ENCODE measurements at regions of chr17 and their contacts with region 1.

Region 1: GRCh38 chr17:75205037-75205792 is at the start of gene NUP85:
- DNase-seq: peak; percentile 84 to 96 (median 92)
- ATAC-seq: peak; percentile 93
- H3K4me3 ChIP-seq: peak within 1 kb of the TSS; percentile 85 to 93
- H3K4me3 Mint-ChIP-seq: peak within 1 kb of the TSS; percentile 94
- H3K27ac ChIP-seq: peak within 1 kb of the TSS; percentile 70 to 89
- H3K27ac Mint-ChIP-seq: peak within 1 kb of the TSS; percentile 99
- H3K4me1 ChIP-seq: peaks cover 19% of the 10 kb centered on the region
- H3K4me1 Mint-ChIP-seq: peaks cover 23% of the 10 kb centered on the region
- H3K27me3 ChIP-seq: no peaks in the 10 kb centered on the region
- H3K27me3 Mint-ChIP-seq: no peaks in the 10 kb centered on the region
- CTCF ChIP-seq: no peak
- total RNA-seq, gene NUP85: 57.4 to 65.3 TPM

Region 2: DNA sequence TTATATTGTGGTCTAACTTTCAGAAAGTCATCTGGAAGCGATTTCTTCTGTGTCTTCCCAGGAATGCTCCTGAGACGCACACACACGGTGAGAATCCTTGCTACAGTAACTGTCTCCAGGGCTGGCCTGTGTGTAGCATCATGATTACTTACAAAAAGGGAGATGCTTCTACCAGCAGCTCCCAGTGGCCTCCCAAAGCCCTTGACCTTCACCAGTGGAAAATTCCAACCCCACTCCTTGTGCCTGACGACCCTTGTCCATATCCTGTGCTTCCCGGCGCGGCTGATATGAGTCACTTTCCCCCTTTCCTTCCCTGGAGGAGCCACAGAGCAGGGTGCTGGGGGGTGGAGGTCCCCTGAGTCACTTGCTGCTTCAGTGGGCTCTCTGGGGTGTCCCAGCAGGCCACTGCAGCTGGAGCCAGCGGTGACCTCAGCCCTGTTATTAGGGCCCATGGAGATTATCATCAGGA is 406.9 kb before region 1 on chr17:
- CTCF ChIA-PET with region 1: no interaction called
- POLR2A ChIA-PET with region 1: no interaction called
- intact Hi-C with region 1: no loop called
- DNase-seq: no peak
- ATAC-seq: no peak
- H3K4me3 ChIP-seq: no peak overlapping the region
- H3K4me3 Mint-ChIP-seq: no peak overlapping the region
- H3K27ac ChIP-seq: no peak overlapping the region
- H3K27ac Mint-ChIP-seq: no peak overlapping the region
- H3K4me1 ChIP-seq: no peaks in the 10 kb centered on the region
- H3K4me1 Mint-ChIP-seq: peaks cover 2% of the 10 kb centered on the region
- H3K27me3 ChIP-seq: no peaks in the 10 kb centered on the region
- H3K27me3 Mint-ChIP-seq: no peaks in the 10 kb centered on the region
- CTCF ChIP-seq: no peak

Region 3: GRCh38 chr17:74923533-74924249 is 281.5 kb before region 1 on chr17:
- CTCF ChIA-PET with region 1: no interaction called
- POLR2A ChIA-PET with region 1: no interaction called
- intact Hi-C with region 1: loop called in 1 of 2 experiments (anchors 1 kb)
- DNase-seq: peak; percentile 45 to 84 (median 73)
- ATAC-seq: peak; percentile 67
- H3K4me3 ChIP-seq: peak overlapping the region; percentile 29 to 41
- H3K4me3 Mint-ChIP-seq: peak overlapping the region; percentile 67
- H3K27ac ChIP-seq: no peak overlapping the region
- H3K27ac Mint-ChIP-seq: no peak overlapping the region
- H3K4me1 ChIP-seq: peaks cover 13% of the 10 kb centered on the region
- H3K4me1 Mint-ChIP-seq: peaks cover 8% of the 10 kb centered on the region
- H3K27me3 ChIP-seq: peaks cover 27% of the 10 kb centered on the region in 2 experiments
- H3K27me3 Mint-ChIP-seq: peaks cover 55% of the 10 kb centered on the region
- CTCF ChIP-seq: peak; percentile 86

Region 4: GRCh38 chr17:75154195-75155106 is 50.8 kb before region 1 on chr17 and contains the start of gene JPT1:
- CTCF ChIA-PET with region 1: interaction called, 4 read pairs
- POLR2A ChIA-PET with region 1: interaction called, 3 read pairs
- intact Hi-C with region 1: loop called (anchors 1 to 2 kb)
- DNase-seq: peak; percentile 94 to 99 (median 97)
- ATAC-seq: peak; percentile 97
- H3K4me3 ChIP-seq: peak within 1 kb of the TSS; percentile 88 to 94
- H3K4me3 Mint-ChIP-seq: peak within 1 kb of the TSS; percentile 91
- H3K27ac ChIP-seq: peak within 1 kb of the TSS; percentile 78 to 81
- H3K27ac Mint-ChIP-seq: peak within 1 kb of the TSS; percentile 87
- H3K4me1 ChIP-seq: peaks cover 23% of the 10 kb centered on the region
- H3K4me1 Mint-ChIP-seq: peaks cover 31% of the 10 kb centered on the region
- H3K27me3 ChIP-seq: no peaks in the 10 kb centered on the region
- H3K27me3 Mint-ChIP-seq: no peaks in the 10 kb centered on the region
- CTCF ChIP-seq: no peak
- total RNA-seq, gene JPT1: 15.1 to 17.3 TPM

Region 5: DNA sequence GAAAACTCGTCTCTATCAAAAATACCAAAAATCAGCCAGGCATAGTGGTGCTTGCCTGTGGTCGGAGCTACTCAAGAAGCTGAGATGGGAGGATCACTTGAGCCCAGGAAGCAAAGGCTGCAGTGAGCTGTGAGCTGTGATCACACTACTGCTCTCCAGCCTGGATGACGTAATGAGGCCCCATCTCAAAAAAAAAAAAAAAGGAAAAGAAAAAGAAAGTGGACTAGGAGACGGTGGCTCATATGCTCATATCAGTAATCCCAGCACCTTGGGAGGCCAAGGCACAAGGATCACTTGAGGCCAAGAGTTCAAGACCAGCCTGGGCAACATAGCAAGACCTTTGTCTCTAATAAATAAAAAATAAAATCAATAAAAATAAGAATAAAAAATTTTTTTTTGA is 13.6 kb before region 1 on chr17:
- CTCF ChIA-PET with region 1: interaction called, 12 read pairs
- POLR2A ChIA-PET with region 1: interaction called, 4 read pairs
- intact Hi-C with region 1: no loop called
- DNase-seq: no peak
- ATAC-seq: no peak
- H3K4me3 ChIP-seq: no peak overlapping the region
- H3K4me3 Mint-ChIP-seq: no peak overlapping the region
- H3K27ac ChIP-seq: no peak overlapping the region
- H3K27ac Mint-ChIP-seq: no peak overlapping the region
- H3K4me1 ChIP-seq: no peaks in the 10 kb centered on the region
- H3K4me1 Mint-ChIP-seq: peaks cover 5% of the 10 kb centered on the region
- H3K27me3 ChIP-seq: no peaks in the 10 kb centered on the region
- H3K27me3 Mint-ChIP-seq: no peaks in the 10 kb centered on the region
- CTCF ChIP-seq: no peak

Region 6: GRCh38 chr17:75252039-75252816 is 47.0 kb after region 1 on chr17:
- CTCF ChIA-PET with region 1: no interaction called
- POLR2A ChIA-PET with region 1: no interaction called
- intact Hi-C with region 1: no loop called
- DNase-seq: no peak
- ATAC-seq: no peak
- H3K4me3 ChIP-seq: no peak overlapping the region
- H3K4me3 Mint-ChIP-seq: no peak overlapping the region
- H3K27ac ChIP-seq: no peak overlapping the region
- H3K27ac Mint-ChIP-seq: peak overlapping the region; percentile 73
- H3K4me1 ChIP-seq: peaks cover 11% of the 10 kb centered on the region
- H3K4me1 Mint-ChIP-seq: peaks cover 59% of the 10 kb centered on the region
- H3K27me3 ChIP-seq: no peaks in the 10 kb centered on the region
- H3K27me3 Mint-ChIP-seq: no peaks in the 10 kb centered on the region
- CTCF ChIP-seq: no peak

Measured in CD8-positive, alpha-beta T cell (primary cell).